Spleen (tissue), 13 donors: ENCODE measurements at regions of chr15 and their contacts with region 1.

Region 1: GRCh38 chr15:65980824-65981456 is 111.6 kb downstream of the RAB11A start:
- DNase-seq: no peak
- H3K4me3 ChIP-seq: no peak overlapping the region
- H3K27ac ChIP-seq: no peak overlapping the region
- H3K4me1 ChIP-seq: peaks cover 0 to 17% (median 11%) of the 10 kb centered on the region in 6 donors
- H3K27me3 ChIP-seq: peaks cover 0 to 47% (median 19%) of the 10 kb centered on the region in 7 donors
- CTCF ChIP-seq: peak; percentile 21 to 78 (median 66)
- POLR2A ChIP-seq: no peak

Region 2: GRCh38 chr15:66287461-66288057 is 306.6 kb after region 1 on chr15:
- intact Hi-C with region 1: loop called (anchors 5 kb)
- DNase-seq: no peak
- H3K4me3 ChIP-seq: no peak overlapping the region
- H3K27ac ChIP-seq: no peak overlapping the region
- H3K4me1 ChIP-seq: peaks cover 1 to 42% (median 15%) of the 10 kb centered on the region in 6 donors
- H3K27me3 ChIP-seq: no peaks in the 10 kb centered on the region
- CTCF ChIP-seq: peak in 10 of 11 experiments; percentile 18 to 73 (median 60)
- POLR2A ChIP-seq: no peak